Activated B cell treated with CpG ODN at 0.5 μM for 24 hours (primary cell): ENCODE measurements at regions of chr16 and their contacts with region 1.

Region 1: GRCh38 chr16:11105038-11105903 is 150.7 kb downstream of the SOCS1 start:
- DNase-seq: no peak
- ATAC-seq: peak; percentile 87
- H3K4me3 Mint-ChIP-seq: peak overlapping the region; percentile 72
- H3K27ac Mint-ChIP-seq: peak overlapping the region; percentile 92
- H3K4me1 Mint-ChIP-seq: peaks cover 45% of the 10 kb centered on the region
- H3K27me3 Mint-ChIP-seq: no peaks in the 10 kb centered on the region
- CTCF ChIP-seq: no peak

Region 2: DNA sequence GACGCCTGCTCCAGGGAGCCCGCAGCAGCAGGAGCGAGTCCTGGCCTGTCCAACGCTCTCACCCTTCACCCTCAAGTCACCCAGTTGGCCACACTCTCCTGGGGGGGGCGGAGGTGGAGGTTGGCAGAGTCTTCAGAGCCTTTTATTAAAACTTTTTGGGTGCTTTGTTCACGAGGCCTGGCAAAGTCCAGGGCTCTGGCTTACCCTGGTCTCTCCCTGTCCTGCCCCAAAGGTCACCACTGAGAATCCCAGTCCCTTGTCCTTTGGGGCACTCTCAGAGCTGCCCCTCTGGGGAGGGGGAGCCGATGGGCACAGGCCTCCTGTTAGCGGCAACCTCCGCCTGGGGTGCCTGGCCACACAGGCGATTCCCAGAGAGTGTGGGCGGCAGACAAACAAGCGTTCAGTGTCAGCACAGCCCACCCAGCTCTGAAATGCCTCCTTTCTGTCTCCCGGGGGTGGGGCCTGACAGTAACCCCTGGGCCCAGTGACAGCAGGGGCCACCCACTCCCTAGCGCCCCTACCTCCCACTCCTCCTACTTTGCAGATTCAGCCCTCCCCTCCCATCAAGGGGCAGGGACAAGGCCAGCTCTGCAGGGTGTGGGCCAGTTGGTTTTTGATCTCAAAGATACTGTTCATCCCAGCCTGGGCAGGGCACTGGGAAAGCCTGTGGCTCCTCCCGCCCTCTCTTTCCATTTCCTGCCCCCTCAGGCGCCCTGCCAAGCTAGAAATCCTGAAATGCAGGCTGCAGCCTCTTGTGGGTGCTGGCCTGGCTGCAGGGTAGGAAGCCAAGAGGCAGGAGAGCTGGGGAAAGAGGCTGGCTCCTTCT is 488.3 kb before region 1 on chr16:
- CTCF ChIA-PET with region 1: no interaction called
- POLR2A ChIA-PET with region 1: no interaction called
- intact Hi-C with region 1: no loop called
- DNase-seq: no peak
- ATAC-seq: no peak
- H3K4me3 Mint-ChIP-seq: no peak overlapping the region
- H3K27ac Mint-ChIP-seq: no peak overlapping the region
- H3K4me1 Mint-ChIP-seq: peaks cover 28% of the 10 kb centered on the region
- H3K27me3 Mint-ChIP-seq: peaks cover 9% of the 10 kb centered on the region
- CTCF ChIP-seq: no peak

Region 3: DNA sequence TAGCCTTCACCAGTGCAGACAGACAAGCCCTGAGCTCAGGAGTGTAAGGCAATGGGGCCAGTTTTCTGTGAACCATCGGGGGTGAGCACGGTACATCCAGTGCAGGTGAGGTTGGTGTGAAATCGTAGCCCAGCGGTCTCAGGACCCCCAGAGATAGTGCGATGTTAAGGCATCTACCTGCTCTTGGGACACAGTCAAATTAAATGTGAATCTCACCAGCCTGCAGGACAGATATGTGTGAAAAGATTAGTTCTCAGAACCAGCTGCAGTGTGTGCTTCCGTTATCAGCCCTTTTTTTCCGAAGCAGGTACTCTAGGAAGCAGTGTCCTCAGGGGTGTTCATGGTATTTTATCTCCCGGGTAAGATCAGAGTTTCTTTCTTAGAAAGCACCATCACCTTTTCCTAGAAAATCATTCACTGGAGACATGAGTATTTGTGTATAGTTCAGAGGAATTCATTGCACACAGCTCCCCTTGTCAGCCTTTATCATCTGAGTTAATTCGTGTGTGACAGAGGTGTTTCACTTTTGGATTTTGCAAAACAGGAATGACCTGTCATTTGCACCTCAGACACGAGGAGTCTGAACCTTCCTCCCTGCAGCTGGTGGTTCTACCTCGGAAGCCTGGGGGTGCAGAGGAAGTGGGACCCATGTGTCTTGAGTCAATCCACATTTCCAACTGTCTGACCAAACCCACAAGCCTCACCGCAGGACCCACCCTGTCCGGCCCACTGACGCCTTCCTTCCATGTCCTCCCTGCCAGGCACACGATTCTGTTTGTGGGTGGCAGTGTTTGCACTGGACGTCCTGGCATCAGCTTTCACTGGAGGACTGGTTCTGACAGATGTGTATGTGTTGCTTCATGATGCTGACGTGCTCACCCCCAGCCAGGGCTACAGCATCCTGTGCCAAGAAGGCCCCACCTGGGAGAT is 53.1 kb before region 1 on chr16:
- CTCF ChIA-PET with region 1: interaction called, 4 read pairs
- POLR2A ChIA-PET with region 1: no interaction called
- intact Hi-C with region 1: loop called (anchors 10 kb)
- DNase-seq: no peak
- ATAC-seq: peak; percentile 70
- H3K4me3 Mint-ChIP-seq: no peak overlapping the region
- H3K27ac Mint-ChIP-seq: peak overlapping the region; percentile 2
- H3K4me1 Mint-ChIP-seq: peaks cover 15% of the 10 kb centered on the region
- H3K27me3 Mint-ChIP-seq: no peaks in the 10 kb centered on the region
- CTCF ChIP-seq: no peak

Region 4: DNA sequence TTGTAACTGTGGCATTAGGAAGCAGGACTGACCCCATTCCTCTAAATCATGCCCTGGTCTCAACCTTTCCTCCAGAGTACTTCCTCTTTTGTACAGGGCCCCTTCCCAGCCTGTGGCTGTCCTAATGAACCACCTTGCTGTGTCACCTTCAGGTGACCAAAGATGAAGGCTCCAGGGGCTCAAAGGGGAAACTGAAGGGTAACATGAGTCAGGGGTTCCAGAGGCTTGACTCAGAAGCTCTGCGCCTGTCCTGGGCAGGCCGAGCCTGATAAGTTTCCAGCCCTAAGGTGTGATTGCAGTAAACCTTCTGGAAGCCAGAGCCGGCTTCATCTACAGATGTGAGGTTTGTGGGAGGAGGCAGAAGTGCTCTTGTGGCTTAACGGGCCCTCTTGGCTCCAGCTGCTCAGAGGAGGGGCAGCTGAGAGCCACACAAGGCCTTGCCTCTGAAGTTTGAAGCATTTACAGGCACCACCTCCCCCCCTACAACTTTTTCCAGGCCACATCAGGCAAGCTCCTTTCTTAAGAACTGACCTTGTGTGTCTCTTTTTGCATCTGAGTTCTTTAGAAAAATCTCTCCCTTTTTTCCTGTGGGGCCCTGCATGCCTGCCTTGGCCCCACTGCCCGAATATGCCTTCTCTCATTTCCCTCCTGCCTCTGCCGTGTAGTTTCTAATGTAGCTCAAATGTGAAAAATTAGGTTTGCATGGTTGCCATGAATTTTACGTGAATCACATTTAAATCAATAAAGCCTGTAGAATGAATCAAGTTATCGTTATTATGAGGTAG is 11.0 kb before region 1 on chr16:
- CTCF ChIA-PET with region 1: interaction called, 3 read pairs
- POLR2A ChIA-PET with region 1: interaction called, 22 read pairs
- intact Hi-C with region 1: loop called (anchors 1 kb)
- DNase-seq: no peak
- ATAC-seq: peak; percentile 67
- H3K4me3 Mint-ChIP-seq: peak overlapping the region; percentile 68
- H3K27ac Mint-ChIP-seq: peak overlapping the region; percentile 94
- H3K4me1 Mint-ChIP-seq: peaks cover 40% of the 10 kb centered on the region
- H3K27me3 Mint-ChIP-seq: no peaks in the 10 kb centered on the region
- CTCF ChIP-seq: no peak

Region 5: GRCh38 chr16:11175787-11176341 is 70.6 kb after region 1 on chr16:
- CTCF ChIA-PET with region 1: no interaction called
- POLR2A ChIA-PET with region 1: interaction called, 4 read pairs
- intact Hi-C with region 1: loop called (anchors 2 kb)
- DNase-seq: no peak
- ATAC-seq: peak; percentile 74
- H3K4me3 Mint-ChIP-seq: peak overlapping the region; percentile 42
- H3K27ac Mint-ChIP-seq: peak overlapping the region; percentile 81
- H3K4me1 Mint-ChIP-seq: peaks cover 57% of the 10 kb centered on the region
- H3K27me3 Mint-ChIP-seq: no peaks in the 10 kb centered on the region
- CTCF ChIP-seq: no peak

Region 6: GRCh38 chr16:11181899-11182279 is 76.6 kb after region 1 on chr16:
- CTCF ChIA-PET with region 1: no interaction called
- POLR2A ChIA-PET with region 1: interaction called, 13 read pairs
- intact Hi-C with region 1: no loop called
- DNase-seq: no peak
- ATAC-seq: peak; percentile 35
- H3K4me3 Mint-ChIP-seq: peak overlapping the region; percentile 64
- H3K27ac Mint-ChIP-seq: peak overlapping the region; percentile 87
- H3K4me1 Mint-ChIP-seq: peaks cover 58% of the 10 kb centered on the region
- H3K27me3 Mint-ChIP-seq: no peaks in the 10 kb centered on the region
- CTCF ChIP-seq: no peak

Region 7: GRCh38 chr16:11689031-11689761 is 583.9 kb after region 1 on chr16:
- CTCF ChIA-PET with region 1: no interaction called
- POLR2A ChIA-PET with region 1: no interaction called
- intact Hi-C with region 1: loop called (anchors 10 kb)
- DNase-seq: no peak
- ATAC-seq: peak; percentile 98
- H3K4me3 Mint-ChIP-seq: peak overlapping the region; percentile 58
- H3K27ac Mint-ChIP-seq: peak overlapping the region; percentile 84
- H3K4me1 Mint-ChIP-seq: peaks cover 77% of the 10 kb centered on the region
- H3K27me3 Mint-ChIP-seq: no peaks in the 10 kb centered on the region
- CTCF ChIP-seq: no peak